CD8-positive, alpha-beta T cell (primary cell): ENCODE measurements at regions of chr3 and their contacts with region 1.

Region 1: GRCh38 chr3:27494784-27495183 is 10.6 kb upstream of the SLC4A7 start:
- DNase-seq: no peak
- ATAC-seq: no peak
- H3K4me3 ChIP-seq: no peak overlapping the region
- H3K4me3 Mint-ChIP-seq: no peak overlapping the region
- H3K27ac ChIP-seq: no peak overlapping the region
- H3K27ac Mint-ChIP-seq: no peak overlapping the region
- H3K4me1 ChIP-seq: no peaks in the 10 kb centered on the region
- H3K4me1 Mint-ChIP-seq: peaks cover 4% of the 10 kb centered on the region
- H3K27me3 ChIP-seq: no peaks in the 10 kb centered on the region
- H3K27me3 Mint-ChIP-seq: no peaks in the 10 kb centered on the region
- CTCF ChIP-seq: no peak

Region 2: DNA sequence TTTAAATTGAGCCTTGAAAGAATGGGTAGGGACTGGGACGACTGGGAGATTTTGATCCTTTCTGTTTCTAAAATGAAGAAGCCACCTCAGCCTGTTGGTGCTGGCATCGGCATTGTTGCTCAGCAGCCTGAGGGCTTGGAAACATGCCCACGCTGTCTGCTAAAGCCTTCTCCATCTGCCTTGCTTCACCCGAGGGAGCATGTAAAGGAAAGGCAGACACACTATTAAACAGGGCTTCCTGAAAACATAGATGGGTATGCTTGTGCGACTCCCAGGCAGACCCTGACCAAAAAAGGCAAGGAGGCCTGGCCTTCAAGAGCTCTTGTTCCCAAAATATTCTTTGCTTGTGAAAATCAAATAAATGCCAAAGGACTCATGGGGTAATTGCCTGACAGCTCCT is 73.6 kb after region 1 on chr3:
- CTCF ChIA-PET with region 1: no interaction called
- POLR2A ChIA-PET with region 1: no interaction called
- intact Hi-C with region 1: loop called in 1 of 2 experiments (anchors 5 kb)
- DNase-seq: no peak
- ATAC-seq: no peak
- H3K4me3 ChIP-seq: no peak overlapping the region
- H3K4me3 Mint-ChIP-seq: no peak overlapping the region
- H3K27ac ChIP-seq: no peak overlapping the region
- H3K27ac Mint-ChIP-seq: no peak overlapping the region
- H3K4me1 ChIP-seq: no peaks in the 10 kb centered on the region
- H3K4me1 Mint-ChIP-seq: no peaks in the 10 kb centered on the region
- H3K27me3 ChIP-seq: no peaks in the 10 kb centered on the region
- H3K27me3 Mint-ChIP-seq: no peaks in the 10 kb centered on the region
- CTCF ChIP-seq: no peak